ENCODE measurements at regions of chr7 and their contacts with region 1.

Region 1: DNA sequence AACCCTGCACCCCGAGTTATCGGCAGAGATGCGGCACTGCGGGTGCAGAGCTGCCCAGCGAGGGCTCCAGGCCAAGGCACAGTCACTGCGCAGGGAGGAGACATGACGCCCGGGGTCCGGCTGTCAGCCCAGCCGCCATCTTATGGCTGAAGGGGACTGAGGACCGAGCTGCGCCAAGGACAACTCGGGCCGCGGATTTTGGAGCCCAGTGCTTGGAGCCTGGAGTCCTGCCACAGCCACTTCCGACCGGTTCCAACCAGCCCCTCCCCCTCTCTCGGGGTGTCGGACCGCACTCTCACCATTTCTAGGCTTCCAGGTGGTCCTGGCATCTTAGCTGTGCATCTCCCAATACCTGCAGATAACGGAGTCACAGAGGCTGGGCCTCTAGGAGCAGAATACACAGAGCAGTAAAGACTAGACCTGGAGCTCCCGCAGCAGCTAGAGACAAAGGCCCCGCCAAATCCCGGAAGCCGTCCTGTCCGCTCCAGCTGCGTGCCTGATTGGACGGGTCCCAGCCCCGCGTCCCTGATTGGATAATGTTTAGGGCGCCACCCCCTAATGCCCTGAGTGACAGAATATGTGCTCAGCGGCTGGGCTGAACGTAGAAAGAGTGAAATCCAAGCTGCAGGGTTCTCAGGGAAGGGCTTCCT is at the start of gene ZNF680:
- DNase-seq: peak; percentile 64 to 93 (median 88)
- ATAC-seq: peak; percentile 99
- H3K4me3 ChIP-seq: peak within 1 kb of the TSS; percentile 95
- H3K4me3 Mint-ChIP-seq: peak within 1 kb of the TSS; percentile 93 to 100 (median 99)
- H3K27ac ChIP-seq: peak within 1 kb of the TSS; percentile 67
- H3K27ac Mint-ChIP-seq: peak within 1 kb of the TSS; percentile 89 to 98 (median 97)
- H3K4me1 ChIP-seq: no peaks in the 10 kb centered on the region
- H3K4me1 Mint-ChIP-seq: peaks cover 14 to 41% (median 35%) of the 10 kb centered on the region in 7 donors
- H3K27me3 ChIP-seq: no peaks in the 10 kb centered on the region
- H3K27me3 Mint-ChIP-seq: no peaks in the 10 kb centered on the region
- total RNA-seq, gene ZNF680: 10.0 to 20.4 (median 12.0) TPM

Region 2: GRCh38 chr7:63925623-63926460 is 636.9 kb before region 1 on chr7:
- CTCF ChIA-PET with region 1: no interaction called
- POLR2A ChIA-PET with region 1: interaction called, 5 read pairs
- intact Hi-C with region 1: loop called (anchors 1 to 5 kb)
- DNase-seq: peak; percentile 69 to 98 (median 95)
- ATAC-seq: peak; percentile 98
- H3K4me3 ChIP-seq: peak overlapping the region; percentile 64
- H3K4me3 Mint-ChIP-seq: peak overlapping the region; percentile 88 to 100 (median 98)
- H3K27ac ChIP-seq: peak overlapping the region; percentile 82
- H3K27ac Mint-ChIP-seq: peak overlapping the region; percentile 87 to 98 (median 95)
- H3K4me1 ChIP-seq: no peaks in the 10 kb centered on the region
- H3K4me1 Mint-ChIP-seq: peaks cover 0 to 24% (median 12%) of the 10 kb centered on the region in 7 donors
- H3K27me3 ChIP-seq: no peaks in the 10 kb centered on the region
- H3K27me3 Mint-ChIP-seq: peaks cover 0 to 4% (median 0%) of the 10 kb centered on the region in 5 donors

Region 3: DNA sequence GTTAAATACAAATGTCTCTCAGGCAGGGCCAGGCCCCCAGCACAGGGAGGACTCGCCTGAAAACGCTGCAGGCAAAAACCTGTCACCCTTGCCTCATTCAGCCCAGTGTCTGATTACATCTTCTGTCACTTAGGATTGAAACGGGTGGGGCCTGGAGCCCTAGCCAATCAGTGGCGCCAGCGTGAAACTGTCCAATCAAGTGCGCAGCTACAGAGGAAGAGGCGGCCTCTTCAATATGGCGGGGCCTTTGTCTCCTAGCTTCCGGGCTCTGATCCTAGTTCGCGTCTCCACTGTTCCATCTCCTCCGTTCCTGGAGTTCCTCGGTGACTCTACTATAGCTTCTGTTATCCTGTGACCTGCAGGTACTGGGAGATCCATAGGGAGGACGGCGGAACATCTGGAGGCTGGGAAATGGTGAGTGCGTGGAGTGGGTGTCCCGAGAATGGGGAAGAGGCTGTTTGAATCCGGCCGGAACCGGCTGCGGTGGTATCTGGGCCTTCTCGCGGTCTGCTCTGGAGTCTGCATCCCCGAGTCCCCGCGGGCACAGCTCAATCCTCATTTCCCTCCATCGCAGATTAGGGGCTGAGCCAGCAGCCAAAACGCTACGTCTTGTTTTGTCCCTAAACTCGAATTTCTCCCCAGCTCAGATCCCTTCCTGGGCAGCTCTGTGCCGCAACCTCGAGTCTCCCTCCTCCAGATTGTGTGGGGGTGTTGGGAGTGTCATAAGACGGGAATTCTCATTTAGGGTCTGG is 248.8 kb before region 1 on chr7 and contains the start of gene ZNF736:
- CTCF ChIA-PET with region 1: no interaction called
- POLR2A ChIA-PET with region 1: interaction called, 10 read pairs
- intact Hi-C with region 1: loop called in 1 of 2 experiments (anchors 1 kb)
- DNase-seq: peak; percentile 64 to 92 (median 87)
- ATAC-seq: peak; percentile 100
- H3K4me3 ChIP-seq: peak within 1 kb of the TSS; percentile 81
- H3K4me3 Mint-ChIP-seq: peak within 1 kb of the TSS; percentile 90 to 100 (median 98)
- H3K27ac ChIP-seq: peak within 1 kb of the TSS; percentile 88
- H3K27ac Mint-ChIP-seq: peak within 1 kb of the TSS; percentile 88 to 100 (median 97)
- H3K4me1 ChIP-seq: peaks cover 8 to 12% of the 10 kb centered on the region in 2 donors
- H3K4me1 Mint-ChIP-seq: peaks cover 22 to 54% (median 39%) of the 10 kb centered on the region in 7 donors
- H3K27me3 ChIP-seq: no peaks in the 10 kb centered on the region
- H3K27me3 Mint-ChIP-seq: no peaks in the 10 kb centered on the region
- total RNA-seq, gene ZNF736: 22.8 to 54.2 (median 35.8) TPM

Region 4: GRCh38 chr7:64665980-64666662 is 103.4 kb after region 1 on chr7 and contains the start of gene ZNF107:
- CTCF ChIA-PET with region 1: no interaction called
- POLR2A ChIA-PET with region 1: interaction called, 20 read pairs
- intact Hi-C with region 1: loop called (anchors 1 kb)
- DNase-seq: peak; percentile 48 to 90 (median 84)
- ATAC-seq: peak; percentile 98
- H3K4me3 ChIP-seq: peak within 1 kb of the TSS; percentile 92
- H3K4me3 Mint-ChIP-seq: peak within 1 kb of the TSS; percentile 92 to 98 (median 96)
- H3K27ac ChIP-seq: peak within 1 kb of the TSS; percentile 96
- H3K27ac Mint-ChIP-seq: peak within 1 kb of the TSS; percentile 96 to 98 (median 97)
- H3K4me1 ChIP-seq: peaks cover 11 to 19% of the 10 kb centered on the region in 2 donors
- H3K4me1 Mint-ChIP-seq: peaks cover 18 to 79% (median 71%) of the 10 kb centered on the region in 7 donors
- H3K27me3 ChIP-seq: no peaks in the 10 kb centered on the region
- H3K27me3 Mint-ChIP-seq: no peaks in the 10 kb centered on the region
- total RNA-seq, gene ZNF107: 11.2 to 33.5 (median 17.3) TPM

Region 5: GRCh38 chr7:65373608-65374351 is 811.0 kb after region 1 on chr7 and contains the start of gene ZNF92:
- CTCF ChIA-PET with region 1: no interaction called
- POLR2A ChIA-PET with region 1: interaction called, 3 read pairs
- intact Hi-C with region 1: loop called in 1 of 2 experiments (anchors 5 kb)
- DNase-seq: peak; percentile 84 to 95 (median 94)
- ATAC-seq: peak; percentile 99
- H3K4me3 ChIP-seq: peak within 1 kb of the TSS; percentile 87
- H3K4me3 Mint-ChIP-seq: peak within 1 kb of the TSS; percentile 90 to 98 (median 96)
- H3K27ac ChIP-seq: peak within 1 kb of the TSS; percentile 82
- H3K27ac Mint-ChIP-seq: peak within 1 kb of the TSS; percentile 87 to 96 (median 93)
- H3K4me1 ChIP-seq: peaks cover 8 to 21% of the 10 kb centered on the region in 2 donors
- H3K4me1 Mint-ChIP-seq: peaks cover 18 to 57% (median 49%) of the 10 kb centered on the region in 7 donors
- H3K27me3 ChIP-seq: no peaks in the 10 kb centered on the region
- H3K27me3 Mint-ChIP-seq: no peaks in the 10 kb centered on the region
- total RNA-seq, gene ZNF92: 16.3 to 22.5 (median 19.3) TPM